Pancreas (tissue), 10 donors: ENCODE measurements at regions of chr17 and their contacts with region 1.

Region 1: DNA sequence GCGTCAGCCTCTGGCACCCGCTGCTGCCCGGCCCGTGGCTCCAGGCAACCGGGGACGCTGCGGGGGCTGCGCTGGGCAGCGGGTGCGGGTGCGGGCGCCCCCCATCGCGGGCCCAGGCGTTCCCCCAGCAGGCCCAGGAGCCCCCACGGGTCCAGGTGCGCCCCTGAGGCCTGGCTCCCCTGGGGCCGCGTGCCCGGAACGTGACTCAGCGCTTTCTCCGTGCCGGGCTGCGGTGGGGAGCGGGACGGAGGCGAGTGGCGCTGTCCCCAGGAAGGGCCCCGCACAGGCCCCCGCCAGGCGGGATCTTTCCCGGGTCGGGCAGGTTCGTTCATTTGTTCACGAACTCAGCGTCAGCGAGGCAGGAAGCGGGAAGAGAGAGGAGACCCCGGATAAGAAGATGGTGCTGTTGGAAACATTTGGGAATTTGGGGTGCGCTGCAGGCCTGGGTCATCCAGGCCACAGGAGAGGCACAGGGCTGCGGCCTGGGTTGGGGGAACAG is 18.4 kb upstream of the EXOC7 start:
- DNase-seq: peak in 1 of 6 donors; percentile 75
- ATAC-seq: peak; percentile 46 to 60 (median 55)
- H3K4me3 ChIP-seq: peak overlapping the region in 2 of 4 donors; percentile 28 to 39
- H3K27ac ChIP-seq: no peak overlapping the region
- H3K4me1 ChIP-seq: peaks cover 0 to 4% (median 0%) of the 10 kb centered on the region in 3 donors
- H3K27me3 ChIP-seq: no peaks in the 10 kb centered on the region
- CTCF ChIP-seq: no peak

Region 2: GRCh38 chr17:76153640-76154039 is 31.7 kb after region 1 on chr17:
- intact Hi-C with region 1: loop called in 1 of 3 experiments (anchors 5 kb)
- DNase-seq: no peak
- ATAC-seq: peak in 1 of 4 donors; percentile 18
- H3K4me3 ChIP-seq: no peak overlapping the region
- H3K27ac ChIP-seq: no peak overlapping the region
- H3K4me1 ChIP-seq: no peaks in the 10 kb centered on the region
- H3K27me3 ChIP-seq: no peaks in the 10 kb centered on the region
- CTCF ChIP-seq: no peak